Activated CD4-positive, alpha-beta T cell treated with anti-CD3 and anti-CD28 coated beads, Interleukin-2, amount 10 ng/mL, durations not matched to agents 24 days and 14 days (primary cell): ENCODE measurements at regions of chr6 and their contacts with region 1.

Region 1: DNA sequence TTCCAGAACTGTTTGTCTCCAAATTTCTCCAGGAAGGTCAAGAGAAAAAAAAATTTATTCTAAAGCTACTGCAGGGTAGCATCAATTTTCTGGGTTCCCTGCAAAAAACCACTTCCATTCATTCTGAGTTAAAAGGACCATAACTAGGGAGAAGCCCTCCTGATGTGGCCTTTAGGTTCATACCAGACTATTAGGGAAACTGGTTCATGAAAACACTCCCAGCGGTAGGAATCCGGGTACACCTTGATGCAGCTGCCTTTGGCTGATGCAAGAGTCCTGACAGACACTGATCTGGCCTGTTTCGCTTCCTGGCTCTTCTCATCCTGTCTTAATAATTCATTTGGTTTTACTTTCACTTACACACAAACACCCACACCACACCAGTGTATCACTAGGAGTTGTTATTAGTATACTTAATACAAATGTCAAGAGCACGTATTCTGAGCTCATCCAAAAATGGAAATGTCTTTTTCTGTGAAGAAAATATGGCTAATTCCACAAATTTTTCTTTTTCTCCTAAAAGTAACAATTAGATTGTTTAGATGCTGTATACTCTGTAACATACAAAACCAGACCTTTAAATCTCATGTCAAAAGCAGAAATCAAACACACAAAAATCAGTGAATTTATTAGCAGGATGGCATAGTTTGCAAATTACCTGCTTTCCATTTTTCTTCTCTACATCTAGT is 38.4 kb upstream of the ARHGAP18 start:
- DNase-seq: peak; percentile 86
- H3K4me3 Mint-ChIP-seq: peak overlapping the region; percentile 66
- H3K27ac Mint-ChIP-seq: peak overlapping the region; percentile 79
- H3K4me1 Mint-ChIP-seq: peaks cover 47% of the 10 kb centered on the region
- H3K27me3 Mint-ChIP-seq: no peaks in the 10 kb centered on the region

Region 2: GRCh38 chr6:129490521-129491245 is 257.7 kb before region 1 on chr6:
- intact Hi-C with region 1: loop called (anchors 1 kb)
- DNase-seq: peak; percentile 91
- H3K4me3 Mint-ChIP-seq: peak overlapping the region; percentile 84
- H3K27ac Mint-ChIP-seq: peak overlapping the region; percentile 98
- H3K4me1 Mint-ChIP-seq: peaks cover 61% of the 10 kb centered on the region
- H3K27me3 Mint-ChIP-seq: no peaks in the 10 kb centered on the region

Region 3: GRCh38 chr6:129498950-129499842 is 249.2 kb before region 1 on chr6:
- intact Hi-C with region 1: loop called (anchors 2 kb)
- DNase-seq: peak; percentile 80
- H3K4me3 Mint-ChIP-seq: peak overlapping the region; percentile 39
- H3K27ac Mint-ChIP-seq: peak overlapping the region; percentile 43
- H3K4me1 Mint-ChIP-seq: peaks cover 58% of the 10 kb centered on the region
- H3K27me3 Mint-ChIP-seq: no peaks in the 10 kb centered on the region

Region 4: DNA sequence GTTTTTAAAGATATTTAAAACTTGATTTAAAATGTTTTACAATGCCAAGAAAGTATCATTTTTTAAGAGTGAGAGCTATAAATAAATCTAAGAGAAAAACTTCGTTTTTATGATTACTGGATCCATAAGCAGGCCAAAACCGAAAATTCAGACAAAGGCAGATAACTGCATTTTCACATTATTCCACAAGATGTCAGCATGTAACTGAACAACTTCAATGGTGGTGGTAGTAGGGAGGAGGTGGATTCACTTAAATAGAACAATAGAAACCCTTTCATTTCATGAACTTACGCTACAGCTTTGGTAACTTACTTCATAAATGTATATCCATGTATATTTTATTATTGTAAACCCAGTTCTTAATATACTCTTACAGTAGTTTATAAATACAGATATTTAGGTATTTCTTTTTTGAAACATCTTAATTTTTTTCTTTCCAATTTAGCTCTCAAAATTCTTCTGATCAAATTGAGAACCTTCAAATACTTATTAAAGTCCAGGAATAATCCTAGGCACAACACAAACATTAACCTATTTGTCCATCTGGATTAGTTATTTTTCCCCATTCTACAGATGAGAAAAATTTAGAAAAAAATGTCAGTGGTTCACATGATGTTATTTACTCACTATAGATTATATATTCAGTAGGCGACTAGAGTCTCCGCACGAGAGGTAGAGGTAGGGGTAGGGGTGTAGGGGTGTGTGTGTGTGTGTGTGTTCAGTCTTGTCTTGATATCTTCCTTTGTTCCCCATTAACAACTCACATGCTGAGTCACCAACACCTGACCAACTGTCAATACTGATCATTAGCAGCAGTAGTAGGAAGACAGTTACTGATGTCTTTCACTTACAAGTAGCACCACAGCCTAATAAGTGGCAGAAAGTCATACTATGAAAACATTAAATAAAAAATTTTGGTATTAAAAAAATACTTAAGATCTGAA is 149.8 kb before region 1 on chr6:
- intact Hi-C with region 1: loop called (anchors 1 kb)
- DNase-seq: peak; percentile 84
- H3K4me3 Mint-ChIP-seq: no peak overlapping the region
- H3K27ac Mint-ChIP-seq: no peak overlapping the region
- H3K4me1 Mint-ChIP-seq: peaks cover 1% of the 10 kb centered on the region
- H3K27me3 Mint-ChIP-seq: no peaks in the 10 kb centered on the region

Region 5: GRCh38 chr6:129709769-129710449 is 38.4 kb before region 1 on chr6 and contains the start of gene ARHGAP18:
- intact Hi-C with region 1: no loop called
- DNase-seq: peak; percentile 93
- H3K4me3 Mint-ChIP-seq: peak within 1 kb of the TSS; percentile 99
- H3K27ac Mint-ChIP-seq: peak within 1 kb of the TSS; percentile 91
- H3K4me1 Mint-ChIP-seq: peaks cover 46% of the 10 kb centered on the region
- H3K27me3 Mint-ChIP-seq: peaks cover 3% of the 10 kb centered on the region
- total RNA-seq, gene ARHGAP18: 3.2 and 3.8 TPM in 2 replicates

Region 6: GRCh38 chr6:129730477-129731165 is 17.7 kb before region 1 on chr6:
- intact Hi-C with region 1: loop called (anchors 2 kb)
- DNase-seq: peak; percentile 80
- H3K4me3 Mint-ChIP-seq: no peak overlapping the region
- H3K27ac Mint-ChIP-seq: no peak overlapping the region
- H3K4me1 Mint-ChIP-seq: peaks cover 12% of the 10 kb centered on the region
- H3K27me3 Mint-ChIP-seq: no peaks in the 10 kb centered on the region

Region 7: DNA sequence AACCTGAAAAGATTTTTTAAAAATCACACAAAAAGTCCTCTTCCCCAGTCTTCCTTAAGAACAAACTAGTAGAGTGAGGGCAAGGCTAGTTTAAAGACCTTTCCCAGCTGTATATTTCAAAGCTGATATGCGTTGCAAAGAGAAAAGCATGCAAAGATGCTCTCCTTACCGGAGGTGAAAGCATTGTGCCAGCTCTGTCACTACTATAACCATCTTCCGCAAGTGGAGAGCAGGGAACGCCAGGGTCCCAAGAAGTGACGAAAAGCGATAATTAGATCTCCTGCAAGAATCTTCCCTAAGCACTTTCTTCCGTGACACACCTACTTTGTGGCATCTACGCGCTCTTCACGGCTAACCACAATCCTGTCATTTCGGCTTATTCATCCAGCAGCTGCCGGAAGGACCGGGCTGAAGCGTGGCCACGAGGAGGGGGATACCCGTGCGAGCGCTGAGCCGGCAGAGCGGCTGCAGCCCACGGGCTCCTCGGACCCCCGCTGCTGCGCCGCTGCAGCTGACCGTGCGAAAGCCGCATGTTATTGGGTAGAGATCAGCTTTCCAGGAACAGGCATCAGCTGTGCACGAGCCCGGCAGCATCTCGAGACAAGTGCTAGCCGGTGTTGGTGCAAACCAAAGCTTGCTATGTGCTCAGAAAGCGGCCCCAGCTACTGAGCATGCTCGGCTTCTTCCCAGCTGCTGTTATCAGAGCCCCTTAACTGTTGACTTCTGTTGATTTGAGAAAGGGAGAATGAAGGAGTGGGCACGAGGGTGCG is 18.8 kb after region 1 on chr6:
- intact Hi-C with region 1: loop called (anchors 1 kb)
- DNase-seq: peak; percentile 89
- H3K4me3 Mint-ChIP-seq: peak overlapping the region; percentile 88
- H3K27ac Mint-ChIP-seq: peak overlapping the region; percentile 81
- H3K4me1 Mint-ChIP-seq: peaks cover 23% of the 10 kb centered on the region
- H3K27me3 Mint-ChIP-seq: peaks cover 65% of the 10 kb centered on the region

Region 8: DNA sequence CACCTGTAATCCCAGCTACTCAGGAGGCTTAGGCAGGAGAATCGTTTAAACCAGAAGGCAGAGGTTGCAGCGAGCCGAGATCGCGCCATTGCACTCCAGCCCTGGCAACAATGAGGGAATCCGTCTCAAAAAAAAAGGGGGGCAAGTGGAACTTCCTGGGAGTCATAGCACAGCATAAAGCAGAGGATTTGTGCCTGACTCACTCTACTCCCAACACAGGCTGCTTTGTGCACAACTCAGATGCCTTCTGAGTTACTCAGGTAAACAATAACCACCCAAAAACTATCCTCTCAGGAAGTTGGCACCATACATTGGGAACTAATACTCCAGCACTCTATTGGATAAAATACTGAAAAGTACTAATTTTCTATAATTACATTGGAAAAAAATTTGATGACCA is 115.3 kb after region 1 on chr6:
- intact Hi-C with region 1: no loop called
- DNase-seq: no peak
- H3K4me3 Mint-ChIP-seq: no peak overlapping the region
- H3K27ac Mint-ChIP-seq: no peak overlapping the region
- H3K4me1 Mint-ChIP-seq: peaks cover 11% of the 10 kb centered on the region
- H3K27me3 Mint-ChIP-seq: no peaks in the 10 kb centered on the region

Region 9: GRCh38 chr6:129908858-129909257 is 160.5 kb after region 1 on chr6:
- intact Hi-C with region 1: no loop called
- DNase-seq: no peak
- H3K4me3 Mint-ChIP-seq: no peak overlapping the region
- H3K27ac Mint-ChIP-seq: no peak overlapping the region
- H3K4me1 Mint-ChIP-seq: no peaks in the 10 kb centered on the region
- H3K27me3 Mint-ChIP-seq: peaks cover 8% of the 10 kb centered on the region

Region 10: GRCh38 chr6:130020907-130021629 is 272.7 kb after region 1 on chr6:
- intact Hi-C with region 1: loop called (anchors 2 kb)
- DNase-seq: peak; percentile 94
- H3K4me3 Mint-ChIP-seq: peak overlapping the region; percentile 95
- H3K27ac Mint-ChIP-seq: peak overlapping the region; percentile 93
- H3K4me1 Mint-ChIP-seq: peaks cover 17% of the 10 kb centered on the region
- H3K27me3 Mint-ChIP-seq: peaks cover 12% of the 10 kb centered on the region

Region 11: GRCh38 chr6:130421585-130421984 is 673.2 kb after region 1 on chr6:
- intact Hi-C with region 1: no loop called
- DNase-seq: no peak
- H3K4me3 Mint-ChIP-seq: no peak overlapping the region
- H3K27ac Mint-ChIP-seq: no peak overlapping the region
- H3K4me1 Mint-ChIP-seq: peaks cover 5% of the 10 kb centered on the region
- H3K27me3 Mint-ChIP-seq: peaks cover 5% of the 10 kb centered on the region